ENCODE measurements at regions of chr19 and their contacts with region 1.

Region 1: GRCh38 chr19:2021453-2022140 is 6.1 kb upstream of the BTBD2 start:
- DNase-seq: no peak
- H3K4me3 ChIP-seq: no peak overlapping the region
- H3K27ac ChIP-seq: no peak overlapping the region
- H3K4me1 ChIP-seq: no peaks in the 10 kb centered on the region
- H3K27me3 ChIP-seq: no peaks in the 10 kb centered on the region
- CTCF ChIP-seq: no peak
- EP300 ChIP-seq: no peak
- POLR2A ChIP-seq: no peak
- RAD21 ChIP-seq: no peak

Region 2: GRCh38 chr19:2032296-2032941 is 10.8 kb after region 1 on chr19:
- CTCF ChIA-PET with region 1: interaction called, 11 read pairs
- POLR2A ChIA-PET with region 1: interaction called, 6 read pairs
- DNase-seq: peak in 1 of 2 experiments; percentile 55
- H3K4me3 ChIP-seq: no peak overlapping the region
- H3K27ac ChIP-seq: no peak overlapping the region; the same call in 1 of the 2 replicates
- H3K4me1 ChIP-seq: peaks cover 0 to 12% (median 4%) of the 10 kb centered on the region in 4 experiments; a peak in 5 of 7 replicates
- H3K27me3 ChIP-seq: no peaks in the 10 kb centered on the region
- CTCF ChIP-seq: no peak
- EP300 ChIP-seq: no peak
- POLR2A ChIP-seq: no peak
- RAD21 ChIP-seq: no peak

Region 3: DNA sequence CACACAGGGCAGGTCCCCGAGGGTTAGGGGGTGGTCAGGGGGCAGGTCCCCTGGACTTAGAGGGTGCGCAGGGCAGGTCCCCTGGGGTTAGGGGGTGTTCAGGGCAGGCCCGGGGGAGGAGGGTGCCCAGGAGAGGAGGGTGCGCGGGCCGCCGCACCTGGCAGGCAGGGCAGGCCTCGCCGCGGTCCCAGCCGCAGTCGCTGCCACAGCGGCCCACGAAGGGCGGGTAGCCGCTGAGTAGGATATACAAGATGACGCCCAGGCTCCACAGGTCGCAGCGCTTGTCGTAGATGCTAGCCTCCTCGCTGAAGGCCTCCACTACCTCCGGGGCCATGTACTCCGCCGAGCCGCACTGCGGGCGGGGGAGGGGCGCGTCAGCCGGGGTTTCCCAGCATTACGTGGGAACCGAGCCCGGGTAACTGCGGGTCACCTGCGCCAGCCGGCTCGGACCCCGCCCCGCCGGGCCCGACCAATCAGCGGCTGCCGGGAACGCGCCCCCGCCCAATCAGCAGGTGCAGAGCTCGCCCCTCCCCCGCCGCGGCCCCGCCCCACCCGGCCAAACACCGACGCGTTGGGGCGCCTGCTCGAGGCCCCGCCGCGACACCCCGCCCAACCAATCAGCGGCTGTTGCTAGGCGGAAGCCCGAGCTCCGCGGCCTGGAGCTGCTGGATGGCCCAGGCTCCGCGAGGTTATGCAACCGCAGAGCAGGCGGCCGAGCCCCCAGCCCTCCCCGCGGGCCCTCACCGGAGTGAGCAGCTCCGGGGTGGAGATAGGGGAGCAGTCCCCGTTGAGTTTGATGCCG is 20.3 kb after region 1 on chr19:
- CTCF ChIA-PET with region 1: interaction called, 13 read pairs
- POLR2A ChIA-PET with region 1: interaction called, 524 read pairs
- DNase-seq: peak; percentile 80 to 97
- H3K4me3 ChIP-seq: peak overlapping the region; percentile 2 to 50 (median 12); a peak in 5 of 8 replicates
- H3K27ac ChIP-seq: peak overlapping the region; percentile 94
- H3K4me1 ChIP-seq: peaks cover 0 to 19% (median 14%) of the 10 kb centered on the region in 4 experiments; a peak in 5 of 7 replicates
- H3K27me3 ChIP-seq: no peaks in the 10 kb centered on the region
- CTCF ChIP-seq: no peak
- EP300 ChIP-seq: no peak; a peak in 1 of 3 replicates
- POLR2A ChIP-seq: peak in 1 of 2 experiments; percentile 55; a peak in 2 of 3 replicates
- RAD21 ChIP-seq: 0 out of 4 replicates have a peak, but pooled peaks of 1 of the 2 experiments have one; percentile 1

Region 4: DNA sequence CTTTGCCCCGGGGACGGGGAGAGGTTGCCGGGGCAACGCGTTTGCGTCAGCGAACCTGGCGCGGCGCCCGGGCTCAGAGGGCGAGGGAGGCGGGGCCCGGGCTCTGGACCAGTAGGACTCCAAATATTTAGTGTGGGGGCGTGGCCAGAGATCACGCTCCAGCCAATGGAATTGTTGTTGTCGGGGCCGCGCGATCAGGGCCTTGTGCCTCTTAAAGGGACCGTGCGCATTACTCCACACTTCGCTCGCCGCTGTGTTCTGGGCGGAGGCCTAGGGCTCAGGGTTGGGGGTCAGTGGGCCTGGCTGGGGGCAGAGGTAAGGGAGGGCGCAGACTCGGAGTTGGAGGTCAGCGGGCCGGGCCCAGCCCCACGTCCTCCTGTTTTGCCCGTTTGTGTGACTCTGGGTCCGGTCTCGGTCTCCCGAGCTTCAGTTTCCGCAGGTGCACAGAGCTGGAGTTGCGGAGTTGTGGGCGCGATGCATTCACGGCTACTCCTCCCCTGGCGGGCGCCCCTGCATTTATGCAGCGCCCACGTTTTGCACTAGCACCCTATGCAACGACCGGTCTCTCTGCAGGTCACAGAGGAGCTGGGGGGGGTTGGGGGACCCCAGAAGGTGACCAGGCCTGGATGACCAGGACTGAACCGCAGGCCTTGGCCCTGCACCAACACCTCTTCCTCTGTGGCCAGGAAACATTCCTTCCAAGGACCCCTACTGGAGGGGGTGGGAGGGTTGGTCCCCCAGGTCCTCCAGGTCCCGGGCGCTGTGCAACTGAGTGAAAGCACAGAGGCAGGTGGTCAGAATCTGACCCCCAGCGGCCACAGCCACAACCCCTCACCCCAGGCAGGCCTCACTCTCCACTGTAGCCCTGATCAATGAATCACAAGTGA is 40.1 kb after region 1 on chr19:
- CTCF ChIA-PET with region 1: interaction called, 11 read pairs
- POLR2A ChIA-PET with region 1: interaction called, 524 read pairs
- DNase-seq: peak; percentile 93 to 98
- H3K4me3 ChIP-seq: peak overlapping the region; percentile 41 to 68 (median 54)
- H3K27ac ChIP-seq: peak overlapping the region; percentile 92
- H3K4me1 ChIP-seq: peaks cover 4 to 28% (median 19%) of the 10 kb centered on the region in 4 experiments
- H3K27me3 ChIP-seq: no peaks in the 10 kb centered on the region
- CTCF ChIP-seq: peak in 2 of 3 experiments; percentile 0 to 4; a peak in 2 of 4 replicates
- EP300 ChIP-seq: no peak
- POLR2A ChIP-seq: peak in 1 of 2 experiments; percentile 76; a peak in 2 of 3 replicates
- RAD21 ChIP-seq: no peak; a peak in 1 of 4 replicates

Region 5: GRCh38 chr19:2096480-2097329 is 75.1 kb after region 1 on chr19 and contains the start of gene IZUMO4:
- CTCF ChIA-PET with region 1: interaction called, 15 read pairs
- POLR2A ChIA-PET with region 1: interaction called, 3 read pairs
- DNase-seq: peak; percentile 94 to 99
- H3K4me3 ChIP-seq: peak within 1 kb of the TSS; percentile 42 to 85 (median 51)
- H3K27ac ChIP-seq: no peak within 1 kb of the TSS; the same call in 1 of the 2 replicates
- H3K4me1 ChIP-seq: peaks cover 0 to 3% (median 1%) of the 10 kb centered on the region in 4 experiments; a peak in 4 of 7 replicates
- H3K27me3 ChIP-seq: no peaks in the 10 kb centered on the region
- CTCF ChIP-seq: peak; percentile 24 to 53 (median 39); a peak in 2 of 4 replicates
- EP300 ChIP-seq: no peak
- POLR2A ChIP-seq: no peak
- RAD21 ChIP-seq: peak; percentile 29 to 32; a peak in 2 of 4 replicates
- total RNA-seq, gene IZUMO4: 1.3 and 1.8 TPM in 2 replicates

Region 6: DNA sequence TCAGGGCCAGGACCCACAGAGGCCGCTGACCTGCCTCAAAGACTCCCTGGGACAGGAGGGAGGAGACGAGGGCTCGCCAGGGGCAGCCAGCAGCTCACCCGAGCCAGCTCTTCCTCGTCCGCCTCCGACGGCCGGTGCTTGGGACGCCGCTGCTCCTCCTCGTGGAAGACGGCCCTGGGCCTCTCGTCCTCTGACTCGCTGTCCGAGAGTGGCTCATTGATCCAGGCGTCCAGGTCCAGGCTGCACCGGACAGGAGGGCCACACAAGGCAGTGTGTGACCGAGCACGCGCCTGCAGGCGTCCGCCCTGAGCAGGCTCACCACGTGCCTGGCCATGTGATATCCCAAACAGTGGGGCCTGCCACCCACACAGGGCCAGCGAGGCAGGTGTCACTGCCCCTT is 94.9 kb after region 1 on chr19:
- CTCF ChIA-PET with region 1: no interaction called
- POLR2A ChIA-PET with region 1: no interaction called
- DNase-seq: no peak
- H3K4me3 ChIP-seq: no peak overlapping the region
- H3K27ac ChIP-seq: no peak overlapping the region
- H3K4me1 ChIP-seq: no peaks in the 10 kb centered on the region
- H3K27me3 ChIP-seq: no peaks in the 10 kb centered on the region
- CTCF ChIP-seq: no peak
- EP300 ChIP-seq: no peak
- POLR2A ChIP-seq: no peak
- RAD21 ChIP-seq: no peak